PC-9 (cell line): ENCODE measurements at regions of chr1 and their contacts with region 1.

Region 1: GRCh38 chr1:54950369-54951163 is 29.9 kb upstream of the TMEM61 start:
- DNase-seq: peak; percentile 72 to 77
- H3K4me3 ChIP-seq: no peak overlapping the region
- H3K27ac ChIP-seq: no peak overlapping the region
- H3K4me1 ChIP-seq: peaks cover 63% of the 10 kb centered on the region
- H3K27me3 ChIP-seq: no peaks in the 10 kb centered on the region
- CTCF ChIP-seq: peak; percentile 84

Region 2: GRCh38 chr1:54671985-54672608 is 278.5 kb before region 1 on chr1:
- CTCF ChIA-PET with region 1: no interaction called
- POLR2A ChIA-PET with region 1: no interaction called
- intact Hi-C with region 1: loop called (anchors 2 kb)
- DNase-seq: peak; percentile 52 to 73
- H3K4me3 ChIP-seq: no peak overlapping the region
- H3K27ac ChIP-seq: no peak overlapping the region
- H3K4me1 ChIP-seq: no peaks in the 10 kb centered on the region
- H3K27me3 ChIP-seq: no peaks in the 10 kb centered on the region
- CTCF ChIP-seq: peak; percentile 94

Region 3: DNA sequence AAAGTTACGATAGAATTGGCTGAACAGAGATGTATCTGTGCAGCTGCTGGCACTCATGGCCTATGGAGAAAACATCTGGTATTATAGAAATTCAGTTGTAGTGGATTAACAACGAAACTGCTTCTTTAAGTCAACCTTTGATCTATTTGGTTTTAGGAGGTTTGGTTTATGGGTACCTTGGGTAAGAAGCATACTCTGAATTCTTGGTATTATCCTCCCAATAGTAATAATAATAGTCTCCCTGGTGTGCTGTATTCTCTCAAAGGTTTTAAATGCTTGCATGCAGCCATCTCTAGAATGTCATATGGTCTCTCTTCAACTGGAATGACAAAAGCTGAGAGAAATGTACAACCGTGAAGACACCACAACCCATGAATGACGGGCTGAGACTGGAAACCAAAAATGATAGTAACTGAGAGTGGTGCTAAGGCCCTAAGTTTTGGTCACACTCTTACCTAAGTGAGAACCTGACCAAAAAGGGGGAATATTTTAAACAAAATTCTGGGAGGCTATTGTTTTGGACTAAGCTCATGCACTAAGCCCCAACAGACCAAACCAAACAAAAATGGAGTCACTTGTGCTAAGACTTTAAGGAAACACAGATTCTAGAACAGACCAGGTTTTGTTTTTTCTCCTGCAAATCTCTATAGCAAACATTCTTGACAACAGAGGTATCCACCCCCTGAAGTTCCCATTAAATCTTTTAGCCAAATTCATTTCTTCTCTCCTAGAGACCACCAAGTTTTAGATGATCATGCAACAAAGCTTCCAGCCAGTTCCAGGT is 12.2 kb after region 1 on chr1:
- CTCF ChIA-PET with region 1: no interaction called
- POLR2A ChIA-PET with region 1: no interaction called
- intact Hi-C with region 1: no loop called
- DNase-seq: no peak
- H3K4me3 ChIP-seq: no peak overlapping the region
- H3K27ac ChIP-seq: no peak overlapping the region
- H3K4me1 ChIP-seq: peaks cover 29% of the 10 kb centered on the region
- H3K27me3 ChIP-seq: no peaks in the 10 kb centered on the region
- CTCF ChIP-seq: no peak

Region 4: GRCh38 chr1:54973205-54973921 is 22.8 kb after region 1 on chr1:
- CTCF ChIA-PET with region 1: interaction called, 3 read pairs
- POLR2A ChIA-PET with region 1: no interaction called
- intact Hi-C with region 1: loop called (anchors 2 kb)
- DNase-seq: no peak
- H3K4me3 ChIP-seq: no peak overlapping the region
- H3K27ac ChIP-seq: no peak overlapping the region
- H3K4me1 ChIP-seq: peaks cover 72% of the 10 kb centered on the region
- H3K27me3 ChIP-seq: no peaks in the 10 kb centered on the region
- CTCF ChIP-seq: peak; percentile 56; the same call in 1 of the 2 replicates

Region 5: DNA sequence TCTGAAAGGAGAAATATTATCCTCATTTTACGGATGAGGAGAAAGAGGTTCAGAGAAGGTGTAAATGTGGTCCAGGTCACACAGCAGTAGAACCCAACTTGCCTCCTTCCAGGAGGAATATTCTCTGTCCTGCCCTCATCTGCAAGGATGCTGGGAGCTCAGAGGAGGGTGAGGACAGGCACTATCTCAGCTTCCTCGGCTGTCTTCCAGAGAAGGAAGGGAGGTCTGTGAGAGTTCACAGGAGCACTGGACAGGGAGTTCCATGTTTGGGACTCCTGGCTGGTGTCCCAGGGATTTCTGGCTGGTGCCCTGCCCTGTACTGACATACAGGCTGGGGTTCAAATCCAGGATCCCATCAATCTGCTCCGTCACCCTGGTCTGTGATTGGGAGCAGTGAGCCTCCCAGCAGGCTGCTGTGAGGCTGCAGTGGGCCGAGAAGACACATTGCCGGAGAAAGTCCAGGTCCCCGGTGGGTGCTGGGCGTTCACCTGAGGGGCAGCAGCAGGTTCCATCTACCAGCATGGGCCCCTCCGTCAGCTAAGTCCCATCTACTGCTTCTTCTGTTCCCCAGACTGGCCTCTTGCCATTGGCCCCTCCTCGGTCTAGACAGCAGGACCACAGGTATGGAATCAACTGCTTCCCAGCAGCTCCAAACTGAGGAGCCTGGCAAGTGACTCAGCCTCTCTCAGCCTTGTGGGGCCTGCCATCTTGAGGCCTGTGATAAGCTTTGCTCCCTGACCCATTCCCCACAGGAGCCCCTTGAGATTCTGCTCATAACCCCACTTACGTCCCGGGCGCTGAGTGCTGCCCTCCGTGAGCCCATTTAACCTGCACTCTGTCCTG is 39.6 kb after region 1 on chr1:
- CTCF ChIA-PET with region 1: interaction called, 13 read pairs
- POLR2A ChIA-PET with region 1: no interaction called
- intact Hi-C with region 1: loop called (anchors 1 kb)
- DNase-seq: no peak
- H3K4me3 ChIP-seq: no peak overlapping the region
- H3K27ac ChIP-seq: no peak overlapping the region
- H3K4me1 ChIP-seq: peaks cover 30% of the 10 kb centered on the region
- H3K27me3 ChIP-seq: no peaks in the 10 kb centered on the region
- CTCF ChIP-seq: no peak

Region 6: DNA sequence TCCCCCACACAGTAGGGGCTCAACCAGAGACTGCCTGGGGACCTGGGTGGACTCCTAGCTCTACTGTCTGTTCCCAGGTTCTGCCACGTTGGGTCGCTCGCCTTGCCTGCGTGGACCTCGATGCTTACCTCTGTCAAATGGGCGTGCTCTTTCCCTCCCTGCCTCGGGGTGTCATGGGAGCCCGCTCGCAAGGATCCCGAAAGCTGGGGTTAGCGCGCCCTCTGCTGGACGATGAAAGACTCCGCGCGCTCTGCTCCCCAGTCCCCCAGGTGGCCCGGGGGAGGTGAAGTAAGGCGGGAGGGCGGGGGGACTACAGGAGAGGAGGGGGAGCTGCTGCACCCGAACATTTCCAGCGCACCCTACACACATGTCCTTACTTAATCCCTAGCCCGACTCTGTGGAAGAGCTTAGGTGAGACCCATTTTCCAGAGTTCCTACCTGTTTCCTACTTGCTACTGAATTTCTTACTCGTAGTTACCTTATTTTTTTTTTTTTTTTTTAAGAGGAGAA is 45.8 kb after region 1 on chr1:
- CTCF ChIA-PET with region 1: interaction called, 13 read pairs
- POLR2A ChIA-PET with region 1: no interaction called
- intact Hi-C with region 1: loop called (anchors 1 kb)
- DNase-seq: peak; percentile 39 to 81
- H3K4me3 ChIP-seq: peak overlapping the region; percentile 41; the same call in 1 of the 2 replicates
- H3K27ac ChIP-seq: no peak overlapping the region
- H3K4me1 ChIP-seq: 0 out of 2 replicates have a peak, but pooled peaks cover 4% of the 10 kb centered on the region
- H3K27me3 ChIP-seq: no peaks in the 10 kb centered on the region
- CTCF ChIP-seq: peak; percentile 95

Region 7: DNA sequence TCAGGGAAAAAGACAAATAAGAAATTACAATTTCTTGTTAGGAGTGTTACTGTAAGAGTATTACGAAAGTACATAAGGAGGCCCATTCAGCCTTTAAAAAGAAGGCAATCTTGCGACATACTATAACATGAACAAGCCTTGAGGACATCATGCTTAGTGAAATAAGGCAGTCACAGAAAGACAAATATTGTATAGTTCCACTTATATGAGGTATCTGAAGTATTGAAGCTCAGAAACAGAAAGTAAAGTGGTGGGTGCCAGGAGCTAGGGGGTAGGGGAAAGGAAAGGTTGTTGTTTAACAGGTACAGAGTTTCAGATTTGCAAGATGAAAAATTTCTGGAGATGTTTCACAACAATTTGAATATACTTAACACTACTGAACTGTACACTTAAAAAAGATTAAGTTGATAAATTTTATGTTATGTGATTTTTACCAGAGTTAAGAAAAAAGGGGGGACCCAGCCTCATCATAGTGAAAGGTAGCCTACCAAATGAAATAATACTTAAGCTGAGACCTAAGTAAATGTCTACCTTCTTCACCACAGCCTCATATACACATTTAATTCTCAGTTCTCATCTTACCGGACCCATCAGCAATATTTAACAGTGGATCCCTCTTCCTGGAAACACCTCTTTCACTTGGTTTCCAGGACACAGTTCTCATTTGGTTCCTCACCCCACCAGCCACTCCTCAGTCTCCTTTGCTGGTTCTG is 245.1 kb after region 1 on chr1:
- CTCF ChIA-PET with region 1: no interaction called
- POLR2A ChIA-PET with region 1: no interaction called
- intact Hi-C with region 1: no loop called
- DNase-seq: no peak
- H3K4me3 ChIP-seq: no peak overlapping the region
- H3K27ac ChIP-seq: no peak overlapping the region
- H3K4me1 ChIP-seq: 0 out of 2 replicates have a peak, but pooled peaks cover 7% of the 10 kb centered on the region
- H3K27me3 ChIP-seq: no peaks in the 10 kb centered on the region
- CTCF ChIP-seq: no peak